Psoas muscle (tissue), 8 donors: ENCODE measurements at regions of chr15 and their contacts with region 1.

Region 1: GRCh38 chr15:73273181-73274002 is 95.4 kb downstream of the HCN4 start:
- DNase-seq: peak; percentile 17 to 53
- ATAC-seq: peak; percentile 84 to 96 (median 90)
- H3K4me3 ChIP-seq: no peak overlapping the region
- H3K27ac ChIP-seq: no peak overlapping the region
- H3K4me1 ChIP-seq: peaks cover 6% of the 10 kb centered on the region
- H3K27me3 ChIP-seq: no peaks in the 10 kb centered on the region
- CTCF ChIP-seq: peak; percentile 80

Region 2: DNA sequence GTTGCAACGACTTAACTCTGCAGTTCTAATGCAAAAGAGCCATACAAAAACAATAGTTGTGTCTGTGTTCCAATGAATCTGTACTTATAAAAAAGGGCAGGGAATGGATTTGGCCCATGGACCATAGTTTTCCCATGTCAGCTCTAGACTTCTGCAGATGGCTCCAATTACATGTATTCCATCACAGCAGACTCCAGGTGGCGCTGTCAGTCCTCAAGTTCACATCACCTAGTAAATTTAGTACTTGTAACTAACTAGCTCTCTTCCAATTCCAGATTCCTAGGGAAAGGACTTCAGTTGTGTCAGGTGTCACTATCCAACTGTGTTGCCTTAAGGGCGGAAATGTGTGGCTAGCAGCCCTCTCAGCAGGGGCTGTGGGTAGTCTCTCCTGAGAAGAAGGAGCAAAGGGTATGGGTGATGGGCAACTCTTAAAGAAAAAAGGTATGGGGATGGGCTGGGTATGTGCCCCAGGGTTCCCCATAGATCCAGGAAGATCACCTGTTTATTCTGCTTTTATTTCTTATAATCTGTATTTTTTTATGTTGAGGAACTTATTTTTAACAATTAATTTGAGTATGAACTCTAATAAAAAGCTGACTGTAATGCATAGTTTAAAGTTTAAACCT is 551.2 kb before region 1 on chr15:
- intact Hi-C with region 1: loop called in 1 of 2 experiments (anchors 5 kb)
- DNase-seq: peak; percentile 32 to 73
- ATAC-seq: peak; percentile 68 to 91 (median 78)
- H3K4me3 ChIP-seq: no peak overlapping the region
- H3K27ac ChIP-seq: no peak overlapping the region
- H3K4me1 ChIP-seq: peaks cover 11% of the 10 kb centered on the region
- H3K27me3 ChIP-seq: no peaks in the 10 kb centered on the region
- CTCF ChIP-seq: peak; percentile 66

Region 3: GRCh38 chr15:72796515-72797337 is 476.7 kb before region 1 on chr15:
- intact Hi-C with region 1: loop called in 1 of 2 experiments (anchors 10 kb)
- DNase-seq: peak; percentile 78
- ATAC-seq: peak; percentile 92 to 98 (median 95)
- H3K4me3 ChIP-seq: peak overlapping the region; percentile 81
- H3K27ac ChIP-seq: peak overlapping the region; percentile 78
- H3K4me1 ChIP-seq: peaks cover 3% of the 10 kb centered on the region
- H3K27me3 ChIP-seq: no peaks in the 10 kb centered on the region
- CTCF ChIP-seq: peak; percentile 79

Region 4: GRCh38 chr15:73240866-73241499 is 32.4 kb before region 1 on chr15:
- intact Hi-C with region 1: loop called (anchors 2 to 5 kb)
- DNase-seq: peak; percentile 47 to 64
- ATAC-seq: peak; percentile 58 to 85 (median 70)
- H3K4me3 ChIP-seq: no peak overlapping the region
- H3K27ac ChIP-seq: no peak overlapping the region
- H3K4me1 ChIP-seq: no peaks in the 10 kb centered on the region
- H3K27me3 ChIP-seq: no peaks in the 10 kb centered on the region
- CTCF ChIP-seq: peak; percentile 91

Region 5: GRCh38 chr15:73357999-73358665 is 84.7 kb after region 1 on chr15:
- intact Hi-C with region 1: no loop called
- DNase-seq: no peak
- ATAC-seq: no peak
- H3K4me3 ChIP-seq: no peak overlapping the region
- H3K27ac ChIP-seq: no peak overlapping the region
- H3K4me1 ChIP-seq: no peaks in the 10 kb centered on the region
- H3K27me3 ChIP-seq: peaks cover 0 to 35% (median 3%) of the 10 kb centered on the region in 3 donors
- CTCF ChIP-seq: no peak

Region 6: DNA sequence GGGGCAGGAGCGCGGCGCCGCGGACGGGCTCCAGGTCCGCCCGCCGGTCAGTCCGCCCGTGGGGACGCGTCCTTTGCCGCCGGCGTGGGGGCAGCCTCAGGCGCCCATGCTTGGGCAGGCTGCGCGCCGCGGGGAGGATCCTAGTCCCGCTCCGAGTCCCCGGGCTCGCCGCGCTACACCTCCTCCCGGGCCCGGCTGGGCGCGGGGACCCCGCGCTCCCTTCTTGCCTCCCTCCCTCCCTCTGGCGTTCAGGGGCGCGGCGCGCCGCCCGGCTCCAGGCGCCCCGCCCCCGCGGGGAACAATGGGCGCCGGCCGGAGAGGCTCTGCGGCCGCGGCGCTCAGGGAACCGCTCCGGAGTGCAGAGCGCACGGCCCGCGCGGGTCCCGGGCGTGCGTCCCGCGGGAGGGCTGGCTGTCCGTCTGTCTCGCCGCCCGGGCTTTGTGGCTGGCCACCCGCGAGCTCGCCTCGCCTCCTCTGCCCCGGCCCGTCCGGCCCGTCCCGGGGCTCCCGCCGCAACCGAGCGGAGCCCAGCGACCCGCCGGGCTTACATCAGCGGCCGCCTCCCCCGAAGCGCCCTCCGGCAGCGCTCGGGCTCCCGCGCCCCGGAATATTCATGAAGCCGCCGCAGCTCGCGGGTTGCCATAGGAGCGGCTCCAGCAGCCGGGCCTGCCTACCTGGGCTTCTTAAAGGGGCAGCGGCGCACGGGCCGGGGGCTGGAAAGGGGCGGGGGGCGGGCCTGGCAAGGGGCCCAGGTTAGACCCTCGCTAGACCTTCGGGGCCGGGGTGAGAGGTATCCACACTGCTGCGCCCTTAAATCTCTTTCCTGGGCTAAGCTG is 95.1 kb after region 1 on chr15 and contains the start of gene HCN4:
- intact Hi-C with region 1: no loop called
- DNase-seq: no peak
- ATAC-seq: no peak
- H3K4me3 ChIP-seq: peak within 1 kb of the TSS; percentile 59
- H3K27ac ChIP-seq: no peak within 1 kb of the TSS
- H3K4me1 ChIP-seq: no peaks in the 10 kb centered on the region
- H3K27me3 ChIP-seq: peaks cover 0 to 88% (median 44%) of the 10 kb centered on the region in 3 donors
- CTCF ChIP-seq: no peak
- total RNA-seq, gene HCN4: not detected